T-cell (primary cell): ENCODE measurements at regions of chr14 and their contacts with region 1.

Region 1: DNA sequence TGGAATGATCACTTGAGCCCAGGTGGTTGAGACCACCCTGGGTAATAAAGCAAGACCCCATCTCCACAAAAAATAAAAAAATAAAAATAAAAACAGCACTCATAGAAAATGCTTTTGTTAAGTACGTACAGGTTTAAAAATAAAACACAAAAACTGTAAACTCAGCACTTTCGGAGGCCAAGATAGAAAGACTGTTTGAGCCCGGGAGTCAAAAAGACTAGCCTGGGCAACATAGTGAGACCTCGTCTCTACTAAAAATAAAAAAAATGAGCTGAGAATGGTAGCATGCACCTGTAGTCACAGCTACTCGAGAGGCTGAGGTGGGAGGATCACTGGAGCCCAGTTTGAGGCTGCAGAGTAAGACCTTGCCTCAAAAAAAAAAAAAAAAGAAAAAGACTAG is 7.5 kb downstream of the ATP6V1D start:
- DNase-seq: no peak
- ATAC-seq: no peak
- H3K4me3 ChIP-seq: no peak overlapping the region
- H3K4me3 Mint-ChIP-seq: no peak overlapping the region
- H3K27ac ChIP-seq: no peak overlapping the region
- H3K27ac Mint-ChIP-seq: no peak overlapping the region
- H3K4me1 ChIP-seq: no peaks in the 10 kb centered on the region
- H3K4me1 Mint-ChIP-seq: peaks cover 12 to 18% (median 17%) of the 10 kb centered on the region in 3 donors
- H3K27me3 ChIP-seq: no peaks in the 10 kb centered on the region
- H3K27me3 Mint-ChIP-seq: no peaks in the 10 kb centered on the region

Region 2: DNA sequence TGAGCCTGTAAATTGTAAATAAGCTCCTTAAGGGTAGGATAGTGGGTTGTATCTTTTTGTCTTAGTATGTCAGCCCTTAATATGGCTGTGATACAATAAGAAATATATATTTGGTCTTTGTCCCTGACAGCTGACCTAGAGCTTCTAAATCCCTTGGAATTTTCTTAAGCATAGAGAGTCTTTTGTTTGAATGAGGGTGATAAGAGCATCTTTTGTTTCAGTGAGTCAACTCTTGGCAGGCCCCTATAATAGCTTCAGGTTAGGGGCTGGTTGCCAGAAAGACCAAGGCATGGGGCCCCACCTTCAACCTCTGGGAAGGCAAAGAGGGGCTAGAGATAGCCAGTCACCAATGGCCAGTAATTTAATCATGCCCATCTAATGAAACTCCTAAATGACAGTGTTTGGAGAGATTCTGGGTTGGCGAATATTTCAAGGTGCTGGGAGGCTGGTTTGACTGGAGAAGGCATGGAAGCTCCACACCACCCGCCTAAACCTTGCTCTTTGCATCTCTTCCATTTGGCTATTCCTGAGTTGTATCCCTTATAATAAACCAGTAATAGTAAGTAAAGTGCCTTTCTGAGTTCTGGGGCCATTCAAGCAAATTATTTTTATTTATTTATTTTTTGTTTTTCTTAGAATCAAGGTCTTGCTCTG is 100.4 kb before region 1 on chr14:
- CTCF ChIA-PET with region 1: no interaction called
- POLR2A ChIA-PET with region 1: interaction called in 1 of 2 experiments, 14 read pairs
- DNase-seq: no peak
- ATAC-seq: no peak
- H3K4me3 ChIP-seq: no peak overlapping the region
- H3K4me3 Mint-ChIP-seq: no peak overlapping the region
- H3K27ac ChIP-seq: no peak overlapping the region
- H3K27ac Mint-ChIP-seq: no peak overlapping the region
- H3K4me1 ChIP-seq: no peaks in the 10 kb centered on the region
- H3K4me1 Mint-ChIP-seq: peaks cover 22 to 31% (median 28%) of the 10 kb centered on the region in 3 donors
- H3K27me3 ChIP-seq: no peaks in the 10 kb centered on the region
- H3K27me3 Mint-ChIP-seq: no peaks in the 10 kb centered on the region

Region 3: GRCh38 chr14:67285876-67286452 is 66.1 kb before region 1 on chr14:
- CTCF ChIA-PET with region 1: interaction called in 1 of 2 experiments, 16 read pairs
- POLR2A ChIA-PET with region 1: no interaction called
- DNase-seq: peak in 1 of 35 experiments; percentile 57
- ATAC-seq: no peak
- H3K4me3 ChIP-seq: no peak overlapping the region
- H3K4me3 Mint-ChIP-seq: no peak overlapping the region
- H3K27ac ChIP-seq: no peak overlapping the region
- H3K27ac Mint-ChIP-seq: no peak overlapping the region
- H3K4me1 ChIP-seq: no peaks in the 10 kb centered on the region
- H3K4me1 Mint-ChIP-seq: peaks cover 0 to 9% (median 5%) of the 10 kb centered on the region in 3 donors
- H3K27me3 ChIP-seq: no peaks in the 10 kb centered on the region
- H3K27me3 Mint-ChIP-seq: no peaks in the 10 kb centered on the region